ENCODE measurements at regions of chr5 and their contacts with region 1.

Region 1: GRCh38 chr5:139633295-139634027 is 14.7 kb upstream of the CXXC5 start:
- DNase-seq: peak; percentile 53
- H3K4me3 Mint-ChIP-seq: no peak overlapping the region
- H3K27ac Mint-ChIP-seq: no peak overlapping the region
- H3K4me1 Mint-ChIP-seq: peaks cover 32% of the 10 kb centered on the region
- H3K27me3 Mint-ChIP-seq: no peaks in the 10 kb centered on the region

Region 2: GRCh38 chr5:139574641-139575312 is 58.7 kb before region 1 on chr5:
- intact Hi-C with region 1: loop called (anchors 5 kb)
- DNase-seq: no peak
- H3K4me3 Mint-ChIP-seq: peak overlapping the region; percentile 24
- H3K27ac Mint-ChIP-seq: peak overlapping the region; percentile 72
- H3K4me1 Mint-ChIP-seq: peaks cover 54% of the 10 kb centered on the region
- H3K27me3 Mint-ChIP-seq: no peaks in the 10 kb centered on the region

Region 3: DNA sequence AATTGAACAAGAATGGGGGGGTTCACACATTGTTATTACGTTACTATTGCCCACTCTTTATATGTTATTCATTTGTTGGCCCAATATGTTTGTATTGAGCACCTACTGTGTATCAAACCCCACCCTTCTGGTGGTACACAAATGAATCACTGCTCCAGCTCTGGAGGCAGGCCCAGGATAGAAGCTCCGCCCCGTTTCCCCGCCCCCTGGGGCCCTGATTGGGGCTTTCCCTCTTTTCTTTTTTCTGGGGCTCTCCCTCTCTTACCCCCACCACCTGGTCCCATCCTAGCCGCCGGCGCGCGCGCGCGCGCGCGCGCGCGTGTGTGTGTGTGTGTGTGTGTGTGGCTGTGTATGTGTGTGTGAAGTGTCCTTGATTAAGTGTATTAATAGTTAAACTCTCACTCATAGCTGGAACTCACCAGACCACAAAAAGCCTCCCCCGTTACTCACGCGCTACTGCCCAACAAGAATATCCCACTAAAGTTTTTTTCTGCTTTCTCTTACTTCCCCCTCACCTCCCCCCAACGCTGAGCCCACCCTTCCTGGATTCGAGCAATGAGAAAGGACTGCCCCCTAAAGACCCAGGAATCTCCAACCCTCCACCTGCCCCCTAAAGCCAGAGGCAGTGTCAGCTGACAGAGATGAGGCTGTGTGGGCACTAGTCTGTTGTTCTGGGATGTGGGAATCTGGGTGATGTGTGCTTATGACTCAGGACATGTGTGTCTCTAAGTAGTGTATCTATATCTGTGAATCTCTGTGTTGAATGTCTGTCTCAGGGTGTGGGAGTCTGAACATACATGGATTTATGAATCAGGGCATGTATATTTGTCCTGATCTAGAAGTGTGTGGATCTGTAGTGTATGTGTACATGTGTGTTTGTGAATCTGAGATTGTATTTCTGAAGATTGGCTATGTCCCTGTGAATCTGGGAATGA is 18.7 kb after region 1 on chr5:
- intact Hi-C with region 1: loop called (anchors 1 kb)
- DNase-seq: peak; percentile 44
- H3K4me3 Mint-ChIP-seq: no peak overlapping the region
- H3K27ac Mint-ChIP-seq: no peak overlapping the region
- H3K4me1 Mint-ChIP-seq: peaks cover 25% of the 10 kb centered on the region
- H3K27me3 Mint-ChIP-seq: peaks cover 40% of the 10 kb centered on the region

Region 4: GRCh38 chr5:139678751-139679750 is 45.6 kb after region 1 on chr5:
- intact Hi-C with region 1: no loop called
- DNase-seq: no peak
- H3K4me3 Mint-ChIP-seq: no peak overlapping the region
- H3K27ac Mint-ChIP-seq: no peak overlapping the region
- H3K4me1 Mint-ChIP-seq: no peaks in the 10 kb centered on the region
- H3K27me3 Mint-ChIP-seq: no peaks in the 10 kb centered on the region

Region 5: GRCh38 chr5:139690064-139690802 is 56.8 kb after region 1 on chr5:
- intact Hi-C with region 1: loop called (anchors 2 kb)
- DNase-seq: no peak
- H3K4me3 Mint-ChIP-seq: no peak overlapping the region
- H3K27ac Mint-ChIP-seq: no peak overlapping the region
- H3K4me1 Mint-ChIP-seq: no peaks in the 10 kb centered on the region
- H3K27me3 Mint-ChIP-seq: peaks cover 8% of the 10 kb centered on the region

Region 6: GRCh38 chr5:139711067-139711905 is 77.8 kb after region 1 on chr5:
- intact Hi-C with region 1: loop called (anchors 5 kb)
- DNase-seq: peak; percentile 18
- H3K4me3 Mint-ChIP-seq: peak overlapping the region; percentile 47
- H3K27ac Mint-ChIP-seq: no peak overlapping the region
- H3K4me1 Mint-ChIP-seq: peaks cover 2% of the 10 kb centered on the region
- H3K27me3 Mint-ChIP-seq: peaks cover 43% of the 10 kb centered on the region

Region 7: GRCh38 chr5:139745800-139746690 is 112.6 kb after region 1 on chr5:
- intact Hi-C with region 1: loop called (anchors 1 kb)
- DNase-seq: no peak
- H3K4me3 Mint-ChIP-seq: peak overlapping the region; percentile 77
- H3K27ac Mint-ChIP-seq: no peak overlapping the region
- H3K4me1 Mint-ChIP-seq: peaks cover 16% of the 10 kb centered on the region
- H3K27me3 Mint-ChIP-seq: peaks cover 30% of the 10 kb centered on the region

Region 8: DNA sequence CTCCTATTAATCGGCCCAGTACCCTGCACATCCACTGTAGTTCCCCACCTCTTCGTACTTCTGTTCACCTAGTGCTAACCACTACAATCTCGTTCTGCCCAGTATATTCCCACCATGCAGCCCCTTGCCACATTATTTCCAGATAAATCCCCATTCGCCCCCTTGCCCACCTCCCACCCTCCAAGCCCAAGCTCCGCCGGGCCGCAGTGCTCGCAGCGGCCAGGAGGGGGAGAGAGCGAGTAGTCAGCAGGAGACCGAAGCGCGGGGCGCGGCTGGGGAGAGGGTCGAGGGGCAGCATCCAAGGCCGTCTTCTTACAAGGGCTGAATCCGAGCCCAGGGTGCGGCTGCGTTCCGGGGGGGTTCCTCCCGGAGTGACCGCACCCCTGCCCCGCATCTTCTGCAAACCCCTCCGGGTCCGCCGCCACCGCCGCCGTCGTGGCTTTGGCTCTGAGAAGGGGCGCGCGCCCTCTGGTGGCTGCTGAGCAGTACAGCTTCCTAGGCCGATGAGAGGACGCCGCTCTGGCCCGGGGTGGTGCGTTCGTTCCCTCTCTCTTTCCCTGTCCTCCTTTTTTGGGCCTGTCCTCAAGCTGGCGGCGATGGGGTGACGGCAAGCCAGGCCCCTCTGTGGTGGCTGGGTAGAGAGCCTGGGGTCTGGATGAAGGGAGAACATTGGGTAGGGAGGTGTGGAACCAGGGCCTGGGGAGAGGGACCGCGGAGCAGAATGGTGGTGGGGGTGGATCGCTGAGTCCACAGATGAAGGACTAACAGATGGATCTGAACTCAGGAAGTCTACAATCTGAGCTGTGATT is 132.2 kb after region 1 on chr5:
- intact Hi-C with region 1: loop called (anchors 1 kb)
- DNase-seq: peak; percentile 68
- H3K4me3 Mint-ChIP-seq: peak overlapping the region; percentile 56
- H3K27ac Mint-ChIP-seq: no peak overlapping the region
- H3K4me1 Mint-ChIP-seq: peaks cover 8% of the 10 kb centered on the region
- H3K27me3 Mint-ChIP-seq: peaks cover 39% of the 10 kb centered on the region

Measured in activated T-helper 2 cell treated with anti-CD3 and anti-CD28 coated beads, Interferon-gamma antibody, Interleukin-2, Interleukin-4, amounts not matched to agents 10 μg/mL and 5 μg/mL and 100 μg/mL, durations not matched to agents 14 hours and 24 hours and 36 hours (primary cell).